Mammary epithelial cell (primary cell): ENCODE measurements at regions of chr9 and their contacts with region 1.

Region 1: DNA sequence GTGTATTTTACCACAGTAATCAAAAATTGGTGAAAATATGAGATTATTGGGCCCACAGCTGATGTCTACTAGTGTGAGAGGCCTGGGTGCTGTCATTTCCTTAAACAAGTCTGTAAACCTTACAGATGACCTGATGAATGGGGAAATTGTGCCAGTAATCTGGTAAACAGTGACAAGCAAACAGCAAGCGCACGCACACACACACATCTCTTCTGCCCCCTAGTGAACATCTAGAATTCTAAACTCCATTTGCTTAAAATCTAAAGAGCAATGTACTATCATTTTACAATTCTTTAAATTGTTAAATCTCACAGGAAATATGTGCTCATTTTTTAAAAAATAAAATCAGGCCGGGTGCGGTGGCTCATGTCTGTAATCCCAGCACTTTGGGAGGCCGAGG is 7.5 kb upstream of the RAPGEF1 start:
- DNase-seq: peak; percentile 42
- H3K4me3 ChIP-seq: no peak overlapping the region
- H3K27ac ChIP-seq: no peak overlapping the region
- H3K4me1 ChIP-seq: peaks cover 9% of the 10 kb centered on the region
- H3K27me3 ChIP-seq: no peaks in the 10 kb centered on the region
- CTCF ChIP-seq: peak; percentile 50 to 71

Region 2: DNA sequence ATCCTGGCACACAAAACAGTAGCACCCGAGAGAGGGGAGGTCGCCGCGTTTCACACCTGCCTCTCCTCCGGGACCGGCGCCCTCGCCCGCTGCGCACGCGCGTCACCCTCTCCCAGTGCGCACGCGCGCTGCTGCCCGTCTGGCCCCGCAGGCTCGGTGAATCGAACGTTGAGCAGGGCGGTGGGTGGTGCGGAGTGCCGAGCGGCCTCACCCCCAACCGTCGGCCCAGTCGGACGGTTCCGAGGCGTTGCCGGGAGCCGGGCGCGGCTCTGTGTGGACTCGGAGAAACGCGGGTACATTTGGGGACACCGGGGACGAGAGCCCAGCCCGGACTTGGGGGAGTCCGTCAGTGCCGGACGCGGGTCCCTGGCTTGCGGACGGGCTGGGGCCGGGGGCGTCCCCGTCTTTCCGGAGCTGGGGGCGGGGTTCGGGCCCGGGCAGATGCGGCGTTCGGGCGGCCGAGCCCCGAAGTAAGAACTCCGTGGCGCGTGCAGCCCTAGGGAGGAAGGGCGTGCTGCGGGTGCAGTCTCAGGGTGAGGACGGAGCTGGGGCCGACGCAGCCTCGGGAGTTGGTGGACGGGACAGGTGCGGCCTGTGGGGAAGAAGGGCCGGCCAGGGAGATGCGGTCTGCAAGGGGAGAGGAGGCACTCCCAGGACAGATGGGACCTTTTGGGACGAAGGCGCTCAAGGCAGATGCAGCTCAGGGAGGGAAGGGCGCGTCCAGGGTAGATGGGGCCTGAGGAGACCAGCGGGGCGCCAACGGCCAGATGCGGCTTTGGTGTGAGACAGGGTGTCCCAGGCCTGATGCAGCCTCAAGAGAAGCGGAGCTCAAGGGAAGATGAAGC is 244.4 kb before region 1 on chr9 and contains the start of gene POMT1:
- CTCF ChIA-PET with region 1: no interaction called
- dilution Hi-C with region 1: no loop called
- in situ Hi-C with region 1: loop called in 1 of 2 experiments (anchors 10 kb)
- intact Hi-C with region 1: loop called (anchors 5 kb)
- DNase-seq: peak; percentile 64
- H3K4me3 ChIP-seq: peak within 1 kb of the TSS; percentile 56 to 86 (median 84)
- H3K27ac ChIP-seq: no peak within 1 kb of the TSS
- H3K4me1 ChIP-seq: peaks cover 26% of the 10 kb centered on the region
- H3K27me3 ChIP-seq: no peaks in the 10 kb centered on the region
- CTCF ChIP-seq: no peak
- total RNA-seq, gene POMT1: 16.0 to 19.6 TPM

Region 3: DNA sequence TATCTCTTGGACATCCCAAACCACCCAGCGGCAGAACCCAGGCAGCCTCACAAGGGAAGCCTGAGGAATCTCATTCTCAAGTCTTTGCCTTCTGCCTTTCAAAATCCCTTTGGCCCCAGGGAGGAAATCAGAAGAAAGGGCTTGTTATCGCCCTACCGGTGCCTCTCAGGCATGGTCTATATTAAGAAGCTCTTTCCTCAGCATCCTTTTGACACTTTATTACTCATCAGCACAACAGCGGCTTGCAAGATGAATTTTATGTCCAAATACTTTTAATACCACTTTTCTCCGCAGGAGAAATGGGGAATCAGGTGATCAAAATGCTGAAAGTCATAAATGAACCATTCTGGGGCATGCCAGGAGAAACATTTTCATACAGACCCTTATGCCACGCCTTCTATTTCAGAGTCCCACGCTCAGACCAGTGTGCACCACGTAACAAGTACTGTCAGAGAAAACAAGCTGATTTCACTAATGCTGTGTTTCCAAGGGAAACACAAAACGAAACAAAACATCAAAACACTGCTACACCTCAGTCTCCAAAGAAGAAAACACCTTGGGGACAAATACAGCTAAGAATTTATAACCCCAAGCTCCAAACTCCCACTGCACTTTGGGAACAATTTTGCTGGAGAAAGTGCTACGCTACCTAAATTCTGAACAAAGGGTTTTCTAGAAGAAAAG is 37.4 kb before region 1 on chr9:
- CTCF ChIA-PET with region 1: no interaction called
- dilution Hi-C with region 1: no loop called
- in situ Hi-C with region 1: no loop called
- intact Hi-C with region 1: no loop called
- DNase-seq: peak; percentile 34
- H3K4me3 ChIP-seq: no peak overlapping the region
- H3K27ac ChIP-seq: peak overlapping the region; percentile 52
- H3K4me1 ChIP-seq: peaks cover 61% of the 10 kb centered on the region
- H3K27me3 ChIP-seq: no peaks in the 10 kb centered on the region
- CTCF ChIP-seq: peak in 1 of 2 donors; percentile 8